Panc1 (cell line): ENCODE measurements at regions of chr1 and their contacts with region 1.

Region 1: DNA sequence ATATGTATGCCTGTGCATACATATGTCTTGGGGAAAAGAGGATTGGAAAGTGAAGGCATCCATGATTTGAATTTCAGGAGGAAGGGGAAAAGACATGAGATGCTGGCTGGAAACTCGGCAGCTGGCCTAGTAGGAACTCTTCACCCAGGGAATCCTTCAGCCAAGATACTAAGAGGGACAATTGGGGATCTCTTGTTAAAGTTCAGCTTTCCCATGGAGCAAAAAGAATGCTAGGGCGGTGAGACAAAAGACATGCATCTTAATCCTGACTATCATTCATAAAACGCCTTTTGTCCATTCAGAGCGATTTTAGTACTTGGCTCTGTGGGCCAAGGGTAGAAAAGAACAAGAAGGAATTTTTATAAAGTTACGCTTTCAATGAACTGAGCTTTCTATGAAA is 20.5 kb downstream of the PDPN start:
- DNase-seq: no peak
- ATAC-seq: no peak
- H3K4me3 ChIP-seq: no peak overlapping the region
- H3K27ac ChIP-seq: no peak overlapping the region
- H3K4me1 ChIP-seq: no peaks in the 10 kb centered on the region
- H3K27me3 ChIP-seq: no peaks in the 10 kb centered on the region
- CTCF ChIP-seq: no peak

Region 2: DNA sequence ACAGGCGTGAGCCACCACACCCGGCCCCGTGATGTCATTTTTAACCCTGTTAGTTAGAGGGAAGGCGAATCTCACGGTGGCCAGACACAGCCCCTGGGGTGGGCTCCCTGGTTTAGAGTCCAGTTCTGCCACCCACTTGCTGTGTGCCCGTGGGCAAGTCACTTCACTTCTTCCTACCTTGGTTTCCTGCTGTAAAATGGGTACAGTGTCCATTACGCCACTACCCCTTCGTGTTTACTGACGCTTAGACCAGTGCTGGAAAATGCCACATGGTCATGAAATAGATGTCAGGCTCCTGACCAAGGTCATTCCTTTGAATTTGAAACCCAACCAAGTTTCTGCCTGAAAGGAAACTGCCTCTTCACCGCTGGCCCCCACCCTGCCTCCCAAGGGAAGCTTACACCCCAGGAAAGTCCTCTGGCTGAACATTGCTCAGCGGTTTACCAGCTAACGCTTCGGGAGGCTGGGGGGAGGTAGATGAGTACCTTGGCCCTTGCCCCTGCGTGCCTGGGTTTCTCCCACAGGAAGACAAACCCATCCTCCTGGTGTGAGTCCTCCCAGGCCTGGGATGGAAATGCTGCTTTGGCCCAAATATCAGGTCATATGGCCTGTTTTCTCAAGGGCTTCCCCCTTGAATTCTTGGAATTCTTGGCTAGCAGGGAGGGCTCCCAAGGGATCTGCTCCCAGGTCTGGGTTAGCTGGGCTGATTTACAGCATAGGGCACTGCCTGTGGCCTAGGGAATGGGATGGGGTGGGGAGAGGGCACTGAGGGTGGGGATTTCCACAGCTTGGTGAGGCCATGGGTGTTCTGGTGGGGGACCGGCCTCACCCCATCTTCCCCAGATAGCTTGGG is 967.9 kb before region 1 on chr1:
- CTCF ChIA-PET with region 1: no interaction called
- POLR2A ChIA-PET with region 1: no interaction called
- in situ Hi-C with region 1: no loop called
- intact Hi-C with region 1: no loop called
- DNase-seq: no peak
- ATAC-seq: no peak
- H3K4me3 ChIP-seq: no peak overlapping the region
- H3K27ac ChIP-seq: peak overlapping the region; percentile 31; the same call in 1 of the 2 replicates
- H3K4me1 ChIP-seq: no peaks in the 10 kb centered on the region
- H3K27me3 ChIP-seq: no peaks in the 10 kb centered on the region
- CTCF ChIP-seq: no peak

Region 3: GRCh38 chr1:13699936-13700520 is 95.9 kb after region 1 on chr1 and contains the start of gene PRDM2:
- CTCF ChIA-PET with region 1: no interaction called
- POLR2A ChIA-PET with region 1: interaction called, 12 read pairs
- in situ Hi-C with region 1: no loop called
- intact Hi-C with region 1: no loop called
- DNase-seq: no peak
- ATAC-seq: peak; percentile 91
- H3K4me3 ChIP-seq: peak within 1 kb of the TSS; percentile 70 to 72
- H3K27ac ChIP-seq: peak within 1 kb of the TSS; percentile 93
- H3K4me1 ChIP-seq: peaks cover 14% of the 10 kb centered on the region; the same call in 1 of the 2 replicates
- H3K27me3 ChIP-seq: peaks cover 3% of the 10 kb centered on the region; the same call in 1 of the 2 replicates
- CTCF ChIP-seq: no peak
- total RNA-seq, gene PRDM2: 40.3 TPM